CD4-positive, alpha-beta T cell (primary cell): ENCODE measurements at regions of chr3 and their contacts with region 1.

Region 1: GRCh38 chr3:14921078-14921616 is 26.2 kb upstream of the NR2C2 start:
- DNase-seq: peak; percentile 67 to 89 (median 80)
- ATAC-seq: peak; percentile 98
- H3K4me3 ChIP-seq: no peak overlapping the region
- H3K4me3 Mint-ChIP-seq: no peak overlapping the region
- H3K27ac ChIP-seq: no peak overlapping the region
- H3K27ac Mint-ChIP-seq: no peak overlapping the region
- H3K4me1 ChIP-seq: peaks cover 7% of the 10 kb centered on the region
- H3K4me1 Mint-ChIP-seq: no peaks in the 10 kb centered on the region
- H3K27me3 ChIP-seq: no peaks in the 10 kb centered on the region
- H3K27me3 Mint-ChIP-seq: no peaks in the 10 kb centered on the region
- CTCF ChIP-seq: peak; percentile 96

Region 2: DNA sequence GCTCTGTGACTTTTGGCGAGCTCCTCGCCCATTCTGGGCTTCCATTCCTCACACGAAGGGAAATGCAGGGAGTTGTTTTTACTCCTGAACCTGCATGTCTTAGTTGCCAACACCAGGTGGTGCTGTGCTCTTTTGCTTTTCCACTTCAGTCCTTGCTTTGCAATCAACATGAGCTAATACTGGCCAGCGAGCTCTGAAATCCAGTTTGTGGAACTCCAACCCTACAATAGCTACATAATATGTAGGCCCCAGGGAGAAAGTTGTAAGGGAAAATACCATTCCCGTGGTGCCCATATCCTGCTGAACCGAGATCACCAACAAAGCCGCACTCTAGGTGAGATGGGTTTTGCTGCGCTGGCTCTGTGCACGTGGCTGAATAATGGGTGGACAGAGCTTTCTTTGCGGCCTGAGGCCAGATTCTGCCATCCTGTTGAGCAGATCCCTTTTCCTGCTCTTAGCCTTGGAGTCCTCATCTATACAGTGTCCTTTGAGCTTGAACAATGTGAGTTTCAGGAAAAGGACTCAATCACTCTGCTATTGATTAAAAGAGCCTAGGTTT is 717.5 kb before region 1 on chr3:
- CTCF ChIA-PET with region 1: interaction called, 3 read pairs
- POLR2A ChIA-PET with region 1: no interaction called
- intact Hi-C with region 1: loop called (anchors 1 to 2 kb)
- DNase-seq: peak in 13 of 14 experiments; percentile 10 to 74 (median 26)
- ATAC-seq: peak; percentile 64
- H3K4me3 ChIP-seq: no peak overlapping the region
- H3K4me3 Mint-ChIP-seq: no peak overlapping the region
- H3K27ac ChIP-seq: no peak overlapping the region
- H3K27ac Mint-ChIP-seq: no peak overlapping the region
- H3K4me1 ChIP-seq: peaks cover 3% of the 10 kb centered on the region
- H3K4me1 Mint-ChIP-seq: no peaks in the 10 kb centered on the region
- H3K27me3 ChIP-seq: no peaks in the 10 kb centered on the region
- H3K27me3 Mint-ChIP-seq: no peaks in the 10 kb centered on the region
- CTCF ChIP-seq: peak; percentile 77

Region 3: GRCh38 chr3:14508961-14509795 is 412.0 kb before region 1 on chr3:
- CTCF ChIA-PET with region 1: no interaction called
- POLR2A ChIA-PET with region 1: no interaction called
- intact Hi-C with region 1: loop called (anchors 2 to 5 kb)
- DNase-seq: peak; percentile 43 to 79 (median 62)
- ATAC-seq: peak; percentile 57
- H3K4me3 ChIP-seq: no peak overlapping the region
- H3K4me3 Mint-ChIP-seq: no peak overlapping the region
- H3K27ac ChIP-seq: no peak overlapping the region
- H3K27ac Mint-ChIP-seq: no peak overlapping the region
- H3K4me1 ChIP-seq: peaks cover 5% of the 10 kb centered on the region
- H3K4me1 Mint-ChIP-seq: peaks cover 5% of the 10 kb centered on the region
- H3K27me3 ChIP-seq: no peaks in the 10 kb centered on the region
- H3K27me3 Mint-ChIP-seq: no peaks in the 10 kb centered on the region
- CTCF ChIP-seq: peak; percentile 95

Region 4: GRCh38 chr3:14672588-14672987 is 248.6 kb before region 1 on chr3:
- CTCF ChIA-PET with region 1: no interaction called
- POLR2A ChIA-PET with region 1: interaction called, 3 read pairs
- intact Hi-C with region 1: loop called (anchors 1 kb)
- DNase-seq: no peak
- ATAC-seq: no peak
- H3K4me3 ChIP-seq: no peak overlapping the region
- H3K4me3 Mint-ChIP-seq: no peak overlapping the region
- H3K27ac ChIP-seq: no peak overlapping the region
- H3K27ac Mint-ChIP-seq: no peak overlapping the region
- H3K4me1 ChIP-seq: no peaks in the 10 kb centered on the region
- H3K4me1 Mint-ChIP-seq: no peaks in the 10 kb centered on the region
- H3K27me3 ChIP-seq: no peaks in the 10 kb centered on the region
- H3K27me3 Mint-ChIP-seq: no peaks in the 10 kb centered on the region
- CTCF ChIP-seq: no peak

Region 5: GRCh38 chr3:14791343-14791945 is 129.7 kb before region 1 on chr3:
- CTCF ChIA-PET with region 1: interaction called, 4 read pairs
- POLR2A ChIA-PET with region 1: no interaction called
- intact Hi-C with region 1: loop called (anchors 1 kb)
- DNase-seq: peak; percentile 21 to 75 (median 45)
- ATAC-seq: no peak
- H3K4me3 ChIP-seq: no peak overlapping the region
- H3K4me3 Mint-ChIP-seq: no peak overlapping the region
- H3K27ac ChIP-seq: no peak overlapping the region
- H3K27ac Mint-ChIP-seq: no peak overlapping the region
- H3K4me1 ChIP-seq: peaks cover 3% of the 10 kb centered on the region
- H3K4me1 Mint-ChIP-seq: no peaks in the 10 kb centered on the region
- H3K27me3 ChIP-seq: peaks cover 0 to 3% of the 10 kb centered on the region in 2 experiments
- H3K27me3 Mint-ChIP-seq: peaks cover 33% of the 10 kb centered on the region
- CTCF ChIP-seq: peak; percentile 50

Region 6: GRCh38 chr3:15023249-15023648 is 102.1 kb after region 1 on chr3:
- CTCF ChIA-PET with region 1: no interaction called
- POLR2A ChIA-PET with region 1: no interaction called
- intact Hi-C with region 1: loop called in 1 of 2 experiments (anchors 5 kb)
- DNase-seq: no peak
- ATAC-seq: no peak
- H3K4me3 ChIP-seq: no peak overlapping the region
- H3K4me3 Mint-ChIP-seq: no peak overlapping the region
- H3K27ac ChIP-seq: no peak overlapping the region
- H3K27ac Mint-ChIP-seq: no peak overlapping the region
- H3K4me1 ChIP-seq: no peaks in the 10 kb centered on the region
- H3K4me1 Mint-ChIP-seq: no peaks in the 10 kb centered on the region
- H3K27me3 ChIP-seq: no peaks in the 10 kb centered on the region
- H3K27me3 Mint-ChIP-seq: no peaks in the 10 kb centered on the region
- CTCF ChIP-seq: no peak

Region 7: DNA sequence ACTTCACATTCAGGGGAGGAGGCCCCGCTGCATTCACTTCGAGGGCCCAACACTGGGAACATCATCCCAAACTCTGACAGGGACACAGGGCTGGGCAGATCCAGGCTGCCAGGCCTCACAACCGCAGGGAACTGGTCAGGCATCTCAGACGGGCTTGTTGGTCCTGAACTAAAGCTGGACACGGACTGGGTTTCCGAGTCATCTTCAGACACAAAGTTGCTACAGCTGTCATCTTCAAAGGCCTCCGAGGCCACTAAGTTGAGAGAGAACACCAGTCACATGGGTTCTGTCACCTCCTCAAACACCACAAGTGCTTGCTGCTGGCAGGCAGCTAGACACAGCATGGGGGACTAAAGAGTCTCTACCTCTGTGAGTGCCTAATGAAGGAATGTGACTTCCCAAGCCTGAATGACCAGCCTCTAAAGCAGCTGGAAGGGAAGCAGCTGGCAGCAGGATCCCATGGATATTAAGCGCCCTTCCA is 335.8 kb after region 1 on chr3:
- CTCF ChIA-PET with region 1: no interaction called
- POLR2A ChIA-PET with region 1: no interaction called
- intact Hi-C with region 1: no loop called
- DNase-seq: no peak
- ATAC-seq: no peak
- H3K4me3 ChIP-seq: no peak overlapping the region
- H3K4me3 Mint-ChIP-seq: no peak overlapping the region
- H3K27ac ChIP-seq: no peak overlapping the region
- H3K27ac Mint-ChIP-seq: peak overlapping the region; percentile 75
- H3K4me1 ChIP-seq: peaks cover 5% of the 10 kb centered on the region
- H3K4me1 Mint-ChIP-seq: peaks cover 13% of the 10 kb centered on the region
- H3K27me3 ChIP-seq: no peaks in the 10 kb centered on the region
- H3K27me3 Mint-ChIP-seq: no peaks in the 10 kb centered on the region
- CTCF ChIP-seq: no peak